ENCODE measurements at regions of chr17 and their contacts with region 1.

Region 1: DNA sequence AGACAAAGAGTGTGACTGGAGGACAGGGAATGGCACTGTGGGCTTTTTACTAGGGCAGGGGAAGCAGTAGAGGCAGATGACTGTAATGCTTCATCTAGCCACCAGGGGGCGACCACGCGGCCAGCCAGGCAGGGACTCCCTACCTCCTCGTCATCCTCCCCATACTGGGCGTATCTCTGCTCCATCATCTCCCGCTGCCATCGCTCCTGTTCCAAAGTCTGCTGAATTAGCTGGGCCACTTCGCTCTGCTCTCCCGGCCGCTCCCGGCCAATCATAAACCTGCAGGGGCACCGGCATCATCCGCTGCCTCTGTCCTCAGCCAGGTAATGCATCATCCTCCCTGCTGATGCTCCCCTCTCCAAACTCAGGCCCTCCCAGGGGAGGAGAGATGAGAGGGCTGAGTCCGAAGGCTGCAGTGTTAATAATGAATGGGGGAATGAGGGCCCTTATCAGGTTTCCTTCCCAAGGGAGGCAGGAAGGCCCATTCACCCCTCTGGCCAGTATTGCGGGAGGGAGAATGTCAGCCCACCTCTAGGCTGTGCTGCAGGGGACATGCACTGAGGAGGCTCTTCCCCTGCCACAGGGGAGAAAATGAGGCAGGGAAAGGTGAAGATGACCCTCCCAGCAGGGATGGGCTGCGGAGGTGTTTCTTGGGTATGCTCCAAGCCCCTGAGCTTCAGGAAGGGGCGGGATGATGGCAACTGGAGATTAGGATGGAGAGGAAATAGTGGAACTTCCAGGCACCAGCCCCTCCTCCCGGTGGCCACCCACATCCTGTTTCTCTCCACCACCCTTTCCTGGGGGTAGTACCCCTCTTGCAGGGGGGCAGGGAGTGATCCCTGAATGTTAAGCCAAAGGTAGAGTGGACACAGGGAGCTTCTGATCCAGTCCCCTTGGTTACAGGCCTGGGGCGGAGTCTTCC is 10.3 kb upstream of the SAMD14 start:
- DNase-seq: peak; percentile 89
- H3K4me3 Mint-ChIP-seq: peak overlapping the region; percentile 55
- H3K27ac Mint-ChIP-seq: peak overlapping the region; percentile 77
- H3K4me1 Mint-ChIP-seq: peaks cover 58% of the 10 kb centered on the region
- H3K27me3 Mint-ChIP-seq: no peaks in the 10 kb centered on the region

Region 2: DNA sequence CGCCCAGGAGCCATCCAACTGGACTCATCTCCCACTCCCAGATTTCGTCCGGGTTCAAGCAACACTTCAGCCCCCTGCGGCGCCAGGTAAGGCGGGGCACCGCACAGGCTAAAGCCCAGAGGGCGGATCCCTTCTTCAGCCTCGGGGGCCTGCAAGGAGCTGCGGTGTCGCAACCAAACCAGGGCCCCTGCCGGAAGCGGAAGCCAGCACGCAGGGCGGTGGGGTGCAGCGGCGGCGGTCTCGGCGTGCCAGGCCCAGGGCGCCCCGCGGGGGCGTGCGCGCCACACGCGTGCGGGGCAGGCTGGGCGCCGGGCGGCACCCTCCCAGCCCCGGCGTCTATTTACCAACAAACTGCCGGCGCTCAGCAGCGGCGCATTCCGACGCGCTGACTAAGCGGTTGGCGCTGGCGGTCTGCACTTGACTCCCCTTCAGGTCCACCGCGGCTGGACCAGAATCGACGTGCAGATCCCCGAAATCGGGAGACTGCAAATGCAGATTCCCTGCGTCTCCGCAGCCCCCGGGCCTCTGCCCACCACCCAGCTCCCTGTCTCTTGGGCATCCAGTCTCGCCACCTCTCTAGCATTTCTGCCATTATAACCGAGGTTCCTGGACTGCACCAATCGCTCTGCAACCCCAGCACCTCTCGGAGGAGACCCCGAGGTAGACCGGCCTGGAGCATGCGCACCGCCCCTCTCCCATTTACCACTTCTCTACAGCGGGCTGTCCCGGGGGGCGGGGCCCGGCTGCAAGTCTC is 171.7 kb before region 1 on chr17:
- CTCF ChIA-PET with region 1: no interaction called
- POLR2A ChIA-PET with region 1: no interaction called
- intact Hi-C with region 1: no loop called
- DNase-seq: peak; percentile 81
- H3K4me3 Mint-ChIP-seq: peak overlapping the region; percentile 83
- H3K27ac Mint-ChIP-seq: no peak overlapping the region
- H3K4me1 Mint-ChIP-seq: peaks cover 34% of the 10 kb centered on the region
- H3K27me3 Mint-ChIP-seq: peaks cover 80% of the 10 kb centered on the region

Region 3: GRCh38 chr17:50114849-50115357 is 25.3 kb before region 1 on chr17:
- CTCF ChIA-PET with region 1: interaction called, 22 read pairs
- POLR2A ChIA-PET with region 1: no interaction called
- intact Hi-C with region 1: no loop called
- DNase-seq: peak; percentile 53
- H3K4me3 Mint-ChIP-seq: no peak overlapping the region
- H3K27ac Mint-ChIP-seq: no peak overlapping the region
- H3K4me1 Mint-ChIP-seq: peaks cover 10% of the 10 kb centered on the region
- H3K27me3 Mint-ChIP-seq: peaks cover 24% of the 10 kb centered on the region

Region 4: DNA sequence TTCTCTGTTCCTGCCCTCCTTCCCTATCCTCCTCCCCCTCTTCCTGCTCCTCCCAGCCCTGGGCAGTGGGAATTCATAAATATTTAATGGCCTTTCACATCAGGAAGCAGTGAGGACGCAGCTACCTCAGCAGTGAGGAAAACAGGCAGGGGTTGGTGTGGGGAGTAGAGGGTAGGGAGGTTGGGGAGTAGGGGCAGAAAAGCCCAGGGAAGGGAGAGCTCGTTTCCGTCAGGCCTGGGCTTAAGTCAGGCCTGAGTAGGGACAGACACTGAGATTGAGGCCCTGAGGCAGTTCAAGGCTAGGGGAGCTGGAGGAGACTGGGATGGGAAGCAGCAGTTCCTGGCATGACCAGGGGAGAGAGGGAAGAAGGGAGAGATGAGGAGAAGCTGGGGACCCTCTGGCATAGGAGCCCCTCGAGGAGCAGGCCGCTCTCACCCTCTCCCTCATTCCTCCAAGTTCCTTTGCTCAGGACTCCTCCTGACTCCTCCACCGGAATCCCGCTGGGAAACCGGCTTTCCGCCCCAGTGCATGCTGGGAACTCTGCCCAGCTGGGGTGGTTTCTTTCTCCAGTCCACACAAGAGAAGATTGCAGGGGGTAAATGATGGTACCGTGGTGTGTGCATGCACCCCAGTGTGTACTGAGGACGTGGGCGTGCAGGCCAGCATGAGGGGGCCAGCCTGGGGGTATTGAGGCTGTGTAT is 16.4 kb before region 1 on chr17:
- CTCF ChIA-PET with region 1: interaction called, 22 read pairs
- POLR2A ChIA-PET with region 1: no interaction called
- intact Hi-C with region 1: no loop called
- DNase-seq: no peak
- H3K4me3 Mint-ChIP-seq: no peak overlapping the region
- H3K27ac Mint-ChIP-seq: no peak overlapping the region
- H3K4me1 Mint-ChIP-seq: peaks cover 4% of the 10 kb centered on the region
- H3K27me3 Mint-ChIP-seq: peaks cover 10% of the 10 kb centered on the region

Region 5: DNA sequence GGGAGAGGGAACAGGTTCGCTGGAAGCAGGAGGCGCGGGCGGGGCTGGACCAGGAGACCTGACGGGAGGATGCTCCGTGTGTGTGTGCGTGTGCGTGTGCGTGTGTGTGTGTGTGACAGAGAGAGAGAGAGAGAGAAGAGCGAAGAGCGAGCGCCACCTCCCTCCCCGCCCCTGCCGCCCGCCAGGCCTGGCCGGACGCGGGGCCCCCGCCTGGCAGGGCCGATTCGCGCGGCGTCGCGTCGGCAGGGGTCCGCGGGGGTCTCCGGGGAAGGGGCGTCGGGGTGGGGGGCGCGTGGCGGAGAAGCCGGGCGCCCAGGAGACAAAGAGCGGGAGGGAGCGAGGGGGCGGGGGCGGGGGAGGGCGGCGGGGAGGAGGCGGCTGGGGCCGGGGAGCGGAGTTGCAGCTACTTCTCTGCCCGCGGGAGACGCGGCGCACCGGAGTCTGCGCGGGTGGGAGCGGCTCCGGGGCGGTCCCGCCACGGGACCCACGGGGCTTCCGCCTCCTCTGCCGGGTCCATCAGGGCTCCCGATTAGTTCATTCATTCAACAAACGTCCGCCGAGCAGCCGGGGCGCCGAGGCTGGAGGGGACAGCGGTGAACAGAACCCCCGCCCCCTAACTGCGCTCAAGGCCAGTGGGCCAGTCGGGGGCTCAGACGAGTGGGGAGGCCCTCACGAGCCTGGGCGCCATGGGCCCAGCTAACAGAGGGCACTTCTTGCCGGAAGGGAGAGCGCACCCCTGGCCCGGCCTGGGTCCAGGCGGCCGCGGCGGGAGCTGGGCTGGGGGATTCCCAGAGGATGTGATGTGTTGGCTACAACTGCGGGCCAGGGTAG is 10.3 kb before region 1 on chr17 and contains the start of gene SAMD14:
- CTCF ChIA-PET with region 1: interaction called, 10 read pairs
- POLR2A ChIA-PET with region 1: interaction called, 3 read pairs
- intact Hi-C with region 1: no loop called
- DNase-seq: peak; percentile 63
- H3K4me3 Mint-ChIP-seq: peak within 1 kb of the TSS; percentile 68
- H3K27ac Mint-ChIP-seq: peak within 1 kb of the TSS; percentile 18
- H3K4me1 Mint-ChIP-seq: peaks cover 27% of the 10 kb centered on the region
- H3K27me3 Mint-ChIP-seq: peaks cover 10% of the 10 kb centered on the region
- total RNA-seq, gene SAMD14: 3.4 to 3.7 TPM

Region 6: DNA sequence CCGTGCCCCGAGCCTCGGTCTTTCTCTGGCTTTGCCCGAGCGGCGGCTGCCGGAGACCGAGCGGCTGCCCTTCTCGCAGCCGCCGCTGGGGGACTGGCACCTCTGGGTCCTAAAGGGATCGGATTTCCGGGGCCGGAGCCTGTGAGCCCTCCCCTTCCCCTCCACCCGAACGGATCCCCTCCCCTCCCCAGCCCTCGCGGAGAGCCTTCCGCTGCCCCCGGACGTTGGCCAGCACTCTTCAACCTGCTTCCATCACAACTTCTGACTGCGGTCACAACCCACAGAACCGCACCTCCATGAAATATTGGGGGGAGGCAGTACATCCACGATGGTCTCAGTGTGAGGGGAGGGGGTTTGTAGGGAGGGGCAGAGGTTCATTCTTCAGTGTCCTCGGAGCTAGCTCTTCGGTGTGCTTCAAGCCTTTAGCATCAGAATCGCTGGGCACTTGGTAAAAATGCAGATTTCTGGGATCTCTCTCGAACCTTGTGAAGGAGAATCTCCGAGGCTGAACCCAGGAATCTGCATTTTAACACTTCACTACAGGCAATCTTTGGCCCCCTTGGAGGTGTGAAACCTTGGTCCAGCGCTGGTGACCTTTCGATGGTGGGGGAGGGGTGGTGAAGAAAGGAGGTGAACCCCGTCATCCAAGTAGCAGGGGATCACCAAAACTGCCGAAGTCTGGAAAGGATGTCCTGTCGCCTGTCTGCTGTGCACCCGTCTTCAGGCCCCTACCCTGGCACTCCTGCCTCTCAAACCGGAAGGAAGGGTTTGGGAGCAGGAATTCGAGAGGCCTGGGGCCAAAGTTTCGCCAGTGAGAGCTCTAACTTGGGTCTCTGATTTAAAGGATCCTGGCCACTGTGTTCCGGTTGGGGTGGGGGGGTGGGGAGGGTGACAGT is 11.1 kb after region 1 on chr17:
- CTCF ChIA-PET with region 1: interaction called, 29 read pairs
- POLR2A ChIA-PET with region 1: interaction called, 9 read pairs
- intact Hi-C with region 1: loop called (anchors 1 kb)
- DNase-seq: peak; percentile 94
- H3K4me3 Mint-ChIP-seq: peak overlapping the region; percentile 87
- H3K27ac Mint-ChIP-seq: peak overlapping the region; percentile 97
- H3K4me1 Mint-ChIP-seq: peaks cover 38% of the 10 kb centered on the region
- H3K27me3 Mint-ChIP-seq: no peaks in the 10 kb centered on the region

Region 7: GRCh38 chr17:50161023-50161910 is 21.1 kb after region 1 on chr17:
- CTCF ChIA-PET with region 1: interaction called, 48 read pairs
- POLR2A ChIA-PET with region 1: interaction called, 3 read pairs
- intact Hi-C with region 1: loop called (anchors 1 kb)
- DNase-seq: peak; percentile 98
- H3K4me3 Mint-ChIP-seq: peak overlapping the region; percentile 79
- H3K27ac Mint-ChIP-seq: peak overlapping the region; percentile 91
- H3K4me1 Mint-ChIP-seq: peaks cover 33% of the 10 kb centered on the region
- H3K27me3 Mint-ChIP-seq: no peaks in the 10 kb centered on the region

Region 8: DNA sequence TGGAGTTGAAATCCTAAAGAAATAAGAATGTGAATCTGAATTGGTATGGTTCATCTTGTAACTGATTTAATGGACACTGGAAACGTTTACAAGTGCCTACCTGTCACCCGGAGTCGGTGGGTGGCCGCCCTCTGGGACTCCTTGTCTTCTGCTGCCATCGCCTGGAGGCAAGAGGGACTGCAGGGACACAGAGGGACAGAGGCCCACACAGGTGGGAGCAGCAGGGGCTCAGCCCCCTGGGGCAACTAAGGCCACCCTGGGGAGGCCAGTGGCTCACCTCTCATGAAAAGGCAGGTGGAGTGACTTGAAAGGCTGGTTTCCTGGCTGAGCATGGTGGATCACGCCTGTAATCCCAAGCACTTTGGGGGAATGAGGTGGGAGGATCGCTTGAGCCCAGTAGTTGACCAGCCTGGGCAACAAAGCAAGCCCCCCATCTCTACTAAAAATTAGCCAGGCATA is 157.2 kb after region 1 on chr17:
- CTCF ChIA-PET with region 1: interaction called, 12 read pairs
- POLR2A ChIA-PET with region 1: no interaction called
- intact Hi-C with region 1: no loop called
- DNase-seq: peak; percentile 90
- H3K4me3 Mint-ChIP-seq: no peak overlapping the region
- H3K27ac Mint-ChIP-seq: no peak overlapping the region
- H3K4me1 Mint-ChIP-seq: peaks cover 8% of the 10 kb centered on the region
- H3K27me3 Mint-ChIP-seq: peaks cover 15% of the 10 kb centered on the region